CD8-positive, alpha-beta T cell (primary cell): ENCODE measurements at regions of chr6 and their contacts with region 1.

Region 1: GRCh38 chr6:57316581-57317059 is 810 bp upstream of the PRIM2 start:
- DNase-seq: peak; percentile 62 to 91 (median 81)
- ATAC-seq: peak; percentile 86
- H3K4me3 ChIP-seq: peak overlapping the region; percentile 58 to 74
- H3K4me3 Mint-ChIP-seq: peak overlapping the region; percentile 99
- H3K27ac ChIP-seq: peak overlapping the region; percentile 55 to 61
- H3K27ac Mint-ChIP-seq: peak overlapping the region; percentile 96
- H3K4me1 ChIP-seq: peaks cover 10% of the 10 kb centered on the region
- H3K4me1 Mint-ChIP-seq: peaks cover 32% of the 10 kb centered on the region
- H3K27me3 ChIP-seq: no peaks in the 10 kb centered on the region
- H3K27me3 Mint-ChIP-seq: no peaks in the 10 kb centered on the region
- CTCF ChIP-seq: peak; percentile 91

Region 2: GRCh38 chr6:56637640-56638039 is 679.0 kb before region 1 on chr6:
- CTCF ChIA-PET with region 1: no interaction called
- POLR2A ChIA-PET with region 1: no interaction called
- intact Hi-C with region 1: loop called (anchors 2 to 5 kb)
- DNase-seq: peak in 2 of 9 experiments; percentile 6 to 23
- ATAC-seq: no peak
- H3K4me3 ChIP-seq: no peak overlapping the region
- H3K4me3 Mint-ChIP-seq: no peak overlapping the region
- H3K27ac ChIP-seq: no peak overlapping the region
- H3K27ac Mint-ChIP-seq: no peak overlapping the region
- H3K4me1 ChIP-seq: no peaks in the 10 kb centered on the region
- H3K4me1 Mint-ChIP-seq: no peaks in the 10 kb centered on the region
- H3K27me3 ChIP-seq: no peaks in the 10 kb centered on the region
- H3K27me3 Mint-ChIP-seq: no peaks in the 10 kb centered on the region
- CTCF ChIP-seq: no peak

Region 3: DNA sequence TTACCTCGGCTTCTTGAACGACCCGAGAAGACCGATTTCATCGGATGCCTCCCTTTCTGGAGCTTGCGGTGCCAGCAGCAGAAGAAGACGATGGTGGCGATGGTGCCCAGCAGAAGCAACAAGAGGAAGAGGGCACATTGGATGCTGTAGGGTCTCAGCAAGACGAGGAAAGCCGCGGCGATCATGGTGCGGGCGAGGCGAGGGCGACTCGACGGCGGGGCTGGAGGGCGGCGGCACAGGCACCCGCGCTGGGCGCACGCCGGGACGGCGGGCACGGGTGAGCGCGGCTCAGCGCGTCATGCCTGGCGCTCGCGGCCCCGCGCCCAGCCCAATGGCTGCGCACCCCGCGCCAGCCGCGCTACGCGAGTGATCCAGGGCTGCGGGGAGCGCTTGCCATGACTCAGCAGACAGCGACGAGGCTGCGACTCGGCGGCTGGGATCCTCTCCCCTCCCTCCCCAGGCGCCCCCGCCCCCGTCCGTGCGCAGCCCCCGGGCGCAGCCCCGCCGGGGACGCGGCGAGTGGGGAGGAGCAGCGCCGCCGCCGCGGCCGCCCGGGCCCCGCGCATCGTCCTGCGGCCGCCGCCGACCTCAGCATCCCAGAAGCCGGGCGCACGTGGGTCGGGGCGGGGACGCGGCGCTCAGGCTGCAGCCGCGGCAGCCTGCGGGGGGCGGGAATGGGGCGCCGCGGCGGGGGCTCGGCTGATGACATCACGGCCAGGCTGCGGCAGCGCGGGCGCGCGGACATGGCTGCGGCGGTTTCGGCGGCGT is 362.0 kb before region 1 on chr6 and contains the start of gene BEND6:
- CTCF ChIA-PET with region 1: interaction called, 4 read pairs
- POLR2A ChIA-PET with region 1: no interaction called
- intact Hi-C with region 1: loop called in 1 of 2 experiments (anchors 1 kb)
- DNase-seq: peak in 5 of 9 experiments; percentile 15 to 49 (median 26)
- ATAC-seq: peak; percentile 65
- H3K4me3 ChIP-seq: peak within 1 kb of the TSS; percentile 32 to 36
- H3K4me3 Mint-ChIP-seq: peak within 1 kb of the TSS; percentile 88
- H3K27ac ChIP-seq: no peak within 1 kb of the TSS
- H3K27ac Mint-ChIP-seq: no peak within 1 kb of the TSS
- H3K4me1 ChIP-seq: peaks cover 14% of the 10 kb centered on the region
- H3K4me1 Mint-ChIP-seq: peaks cover 16% of the 10 kb centered on the region
- H3K27me3 ChIP-seq: peaks cover 7 to 21% of the 10 kb centered on the region in 2 experiments
- H3K27me3 Mint-ChIP-seq: peaks cover 64% of the 10 kb centered on the region
- CTCF ChIP-seq: no peak
- total RNA-seq, gene BEND6: not detected

Region 4: DNA sequence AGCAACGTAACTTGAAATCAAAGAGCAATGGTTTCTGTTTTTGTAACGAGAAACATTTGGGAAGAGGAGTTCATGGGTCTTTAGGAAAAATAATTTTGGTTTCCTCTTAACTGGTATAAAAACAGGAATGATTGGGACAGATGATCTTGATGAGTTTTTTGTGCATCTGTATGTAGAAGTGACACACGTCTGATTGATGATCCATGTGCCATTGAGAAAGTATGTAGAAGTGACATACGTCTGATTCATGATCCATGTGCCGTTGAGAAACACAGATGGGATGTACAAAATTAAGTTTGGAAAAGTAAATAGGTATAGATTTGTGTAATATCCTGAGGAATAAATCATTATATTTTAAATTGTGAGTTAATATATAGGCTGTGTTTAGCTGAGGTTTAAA is 268.0 kb before region 1 on chr6:
- CTCF ChIA-PET with region 1: interaction called, 4 read pairs
- POLR2A ChIA-PET with region 1: no interaction called
- intact Hi-C with region 1: loop called (anchors 2 to 10 kb)
- DNase-seq: no peak
- ATAC-seq: no peak
- H3K4me3 ChIP-seq: no peak overlapping the region
- H3K4me3 Mint-ChIP-seq: no peak overlapping the region
- H3K27ac ChIP-seq: no peak overlapping the region
- H3K27ac Mint-ChIP-seq: no peak overlapping the region
- H3K4me1 ChIP-seq: peaks cover 9% of the 10 kb centered on the region
- H3K4me1 Mint-ChIP-seq: peaks cover 27% of the 10 kb centered on the region
- H3K27me3 ChIP-seq: no peaks in the 10 kb centered on the region
- H3K27me3 Mint-ChIP-seq: no peaks in the 10 kb centered on the region
- CTCF ChIP-seq: no peak

Region 5: DNA sequence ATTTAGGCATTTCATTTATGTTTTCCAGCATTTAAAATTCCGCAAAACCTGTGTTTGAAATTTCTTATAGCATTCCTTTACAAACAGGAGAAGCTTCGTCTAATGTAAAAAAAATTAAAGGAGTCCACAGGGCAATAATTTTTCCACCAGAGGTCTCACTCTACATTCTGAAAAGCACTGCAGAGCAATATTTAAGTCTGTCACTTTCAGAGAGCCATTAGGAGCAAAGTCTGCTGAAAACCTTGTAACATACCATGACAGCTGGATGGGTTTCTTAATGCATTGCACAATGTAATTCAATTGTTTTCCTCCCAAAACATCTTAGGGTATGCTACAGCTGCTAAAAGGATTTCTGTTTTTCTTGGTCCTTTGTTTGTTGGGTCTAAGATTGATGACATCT is 126.5 kb before region 1 on chr6:
- CTCF ChIA-PET with region 1: interaction called, 5 read pairs
- POLR2A ChIA-PET with region 1: no interaction called
- intact Hi-C with region 1: loop called in 1 of 2 experiments (anchors 1 kb)
- DNase-seq: no peak
- ATAC-seq: no peak
- H3K4me3 ChIP-seq: no peak overlapping the region
- H3K4me3 Mint-ChIP-seq: no peak overlapping the region
- H3K27ac ChIP-seq: no peak overlapping the region
- H3K27ac Mint-ChIP-seq: no peak overlapping the region
- H3K4me1 ChIP-seq: no peaks in the 10 kb centered on the region
- H3K4me1 Mint-ChIP-seq: no peaks in the 10 kb centered on the region
- H3K27me3 ChIP-seq: no peaks in the 10 kb centered on the region
- H3K27me3 Mint-ChIP-seq: no peaks in the 10 kb centered on the region
- CTCF ChIP-seq: no peak

Region 6: DNA sequence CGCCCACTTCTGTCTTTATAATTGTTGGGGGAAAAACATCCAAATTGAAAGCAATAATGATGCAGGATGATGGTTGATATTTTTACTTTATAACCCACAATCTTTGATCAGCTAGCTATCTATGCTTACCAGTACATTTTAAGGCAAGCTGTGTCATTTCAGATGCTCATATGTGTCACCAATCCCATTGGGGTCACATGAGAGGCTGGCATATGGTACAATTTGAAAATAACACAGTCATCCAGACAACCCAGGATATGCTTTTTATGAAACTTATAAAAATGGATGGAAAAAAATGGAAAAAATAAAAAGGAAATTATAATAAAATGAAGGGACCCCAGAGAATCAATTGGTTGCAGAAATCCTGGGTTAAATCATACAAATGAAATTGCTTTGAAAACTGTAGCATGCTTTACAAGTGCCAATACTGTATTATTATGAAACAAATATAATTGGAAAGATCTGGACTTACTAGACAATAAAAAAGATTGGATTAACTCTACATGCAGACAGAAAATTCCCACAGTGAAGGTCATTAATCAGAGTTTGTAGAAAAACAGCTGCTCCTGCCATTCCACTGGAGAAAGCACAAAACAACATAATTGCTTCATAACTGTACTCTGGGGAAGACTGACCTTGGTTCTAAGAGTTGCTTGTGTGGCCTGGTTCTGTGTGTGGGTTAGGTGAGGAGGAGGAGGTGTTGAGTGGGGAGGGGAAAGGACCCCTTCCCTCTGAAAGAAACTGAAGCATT is 12.5 kb before region 1 on chr6:
- CTCF ChIA-PET with region 1: interaction called, 13 read pairs
- POLR2A ChIA-PET with region 1: interaction called, 3 read pairs
- intact Hi-C with region 1: no loop called
- DNase-seq: no peak
- ATAC-seq: no peak
- H3K4me3 ChIP-seq: no peak overlapping the region
- H3K4me3 Mint-ChIP-seq: no peak overlapping the region
- H3K27ac ChIP-seq: no peak overlapping the region
- H3K27ac Mint-ChIP-seq: no peak overlapping the region
- H3K4me1 ChIP-seq: no peaks in the 10 kb centered on the region
- H3K4me1 Mint-ChIP-seq: no peaks in the 10 kb centered on the region
- H3K27me3 ChIP-seq: no peaks in the 10 kb centered on the region
- H3K27me3 Mint-ChIP-seq: peaks cover 10% of the 10 kb centered on the region
- CTCF ChIP-seq: no peak